ENCODE measurements at regions of chr17 and their contacts with region 1.

Region 1: GRCh38 chr17:42112552-42113176 is at the start of gene DHX58:
- DNase-seq: peak; percentile 94
- CTCF ChIP-seq: no peak

Region 2: DNA sequence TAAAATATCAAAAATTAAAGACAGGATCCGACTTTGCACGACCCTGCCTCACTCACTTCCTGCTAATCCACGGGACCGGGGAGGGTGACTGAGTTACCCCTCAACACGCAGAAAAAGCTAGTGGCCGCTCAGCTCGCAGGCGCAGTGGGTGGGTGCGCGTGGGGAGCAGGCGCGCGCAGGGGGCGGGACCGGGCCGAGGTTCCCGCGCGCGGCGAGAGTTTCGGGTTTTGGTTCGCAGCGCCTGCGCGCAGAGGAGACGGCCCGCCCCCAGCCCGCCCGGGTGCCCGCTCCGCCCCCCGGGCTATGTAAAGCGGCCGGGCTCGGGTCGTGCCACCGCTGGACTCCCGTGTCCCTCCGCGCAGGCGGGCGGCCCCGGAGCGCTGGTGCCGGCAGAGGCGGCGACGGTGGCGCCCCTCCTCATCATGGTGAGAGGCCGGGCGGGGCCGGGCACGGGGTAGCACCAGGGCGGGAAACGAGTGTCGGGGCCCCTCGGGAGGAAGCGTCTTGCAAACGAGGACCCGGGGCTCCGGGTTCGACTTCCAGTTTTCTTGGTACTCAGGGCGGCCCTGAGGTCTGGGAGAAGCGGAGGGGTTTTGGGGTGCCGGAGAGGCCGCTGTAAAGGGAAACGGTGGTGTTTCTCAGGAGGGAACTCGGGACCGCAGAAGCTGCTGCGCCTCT is 146.1 kb before region 1 on chr17 and contains the start of gene CNP:
- in situ Hi-C with region 1: loop called (anchors 10 kb)
- DNase-seq: peak; percentile 98
- CTCF ChIP-seq: no peak

Region 3: DNA sequence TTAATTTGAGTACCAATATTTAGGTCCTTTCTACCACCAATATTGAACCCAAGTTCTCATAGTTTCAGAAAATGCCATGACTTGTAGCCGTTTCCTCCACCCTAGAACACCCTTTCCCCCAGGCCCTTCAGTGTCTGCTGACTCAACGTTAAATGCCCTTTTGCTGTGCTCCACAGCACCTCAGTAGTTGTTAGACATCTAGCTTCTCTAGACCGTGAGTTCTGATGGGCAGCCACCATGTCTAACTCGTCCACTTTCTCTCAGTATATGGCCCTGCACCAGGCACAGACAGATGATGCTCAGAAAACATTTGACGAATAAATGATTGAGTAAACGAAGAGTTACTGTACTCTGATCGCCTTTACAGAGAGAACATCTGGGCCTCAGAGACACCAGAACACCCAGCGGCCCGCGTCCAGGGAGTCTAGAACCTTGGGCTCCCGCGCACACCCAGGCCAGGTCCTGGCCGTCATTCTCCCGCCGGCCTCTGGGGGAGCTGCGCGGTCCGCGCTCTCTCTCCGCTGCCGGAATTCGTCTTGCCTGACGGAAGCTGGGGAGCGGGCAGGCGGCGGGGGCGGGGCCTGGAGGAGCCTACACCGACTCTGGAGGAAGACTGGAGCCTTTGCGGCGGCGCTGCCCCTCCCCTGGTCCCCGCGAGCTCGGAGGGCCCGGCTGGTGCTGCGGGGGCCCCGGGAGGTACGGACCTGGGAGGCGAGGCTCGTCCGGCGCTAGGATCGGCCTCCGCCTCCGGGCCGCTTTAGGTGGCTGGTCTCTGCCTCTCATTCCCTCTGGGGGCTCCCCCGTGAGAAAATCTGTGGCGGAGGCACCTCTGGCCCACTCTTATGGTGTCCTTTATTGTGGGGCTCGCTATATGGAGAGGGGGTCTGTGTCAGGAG is 92.9 kb before region 1 on chr17 and contains the start of gene NKIRAS2:
- in situ Hi-C with region 1: loop called (anchors 10 kb)
- DNase-seq: peak; percentile 96
- CTCF ChIP-seq: peak; percentile 95

Region 4: GRCh38 chr17:42193969-42194899 is 81.6 kb after region 1 on chr17 and contains the start of gene GHDC:
- in situ Hi-C with region 1: no loop called
- DNase-seq: peak; percentile 90
- CTCF ChIP-seq: no peak

Region 5: DNA sequence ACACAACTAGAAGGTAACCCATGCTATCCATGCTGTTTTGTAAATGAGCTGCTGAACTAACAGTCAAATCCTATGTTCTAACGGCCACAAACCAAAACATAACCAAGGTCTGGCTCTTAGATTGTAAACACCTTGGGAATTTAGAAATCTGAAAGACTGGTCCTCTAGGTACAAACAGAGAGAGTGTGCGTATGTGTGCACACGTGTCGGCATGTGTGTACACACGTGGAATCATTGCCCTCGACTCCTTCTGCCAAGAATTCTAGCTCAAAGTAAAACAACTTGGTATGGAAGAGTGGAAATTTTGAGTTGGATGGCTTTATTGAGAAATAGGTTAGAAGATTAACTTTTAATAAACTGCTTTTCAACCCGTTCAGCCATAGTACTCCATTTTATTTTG is 99.7 kb after region 1 on chr17:
- in situ Hi-C with region 1: no loop called
- DNase-seq: no peak
- CTCF ChIP-seq: no peak

Measured in GM13976 (cell line).